Activated CD4-positive, alpha-beta memory T cell treated with anti-CD3 and anti-CD28 coated beads for 36 hours (primary cell): ENCODE measurements at regions of chr3 and their contacts with region 1.

Region 1: GRCh38 chr3:153043729-153044328 is 118.2 kb upstream of the RAP2B start:
- DNase-seq: no peak
- H3K4me3 Mint-ChIP-seq: no peak overlapping the region
- H3K27ac Mint-ChIP-seq: no peak overlapping the region
- H3K4me1 Mint-ChIP-seq: peaks cover 7% of the 10 kb centered on the region
- H3K27me3 Mint-ChIP-seq: no peaks in the 10 kb centered on the region

Region 2: DNA sequence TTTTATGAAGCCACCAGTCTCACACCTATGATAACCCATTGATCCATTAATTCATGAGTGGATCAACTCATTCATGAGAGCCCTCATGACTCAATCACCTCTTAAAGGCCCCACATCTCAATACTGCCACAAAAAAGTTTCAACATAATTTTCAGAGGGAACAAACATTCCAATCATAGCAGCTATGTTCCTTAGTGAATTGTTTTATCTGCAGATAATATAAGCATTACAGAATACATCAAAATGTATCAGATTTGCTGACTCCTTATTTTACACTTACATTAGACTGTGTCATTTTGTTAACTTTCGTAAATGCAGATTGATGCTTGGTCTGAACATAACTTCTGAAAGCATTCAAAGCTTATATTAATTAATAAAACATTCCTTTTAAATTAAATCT is 930.4 kb before region 1 on chr3:
- CTCF ChIA-PET with region 1: no interaction called
- POLR2A ChIA-PET with region 1: no interaction called
- intact Hi-C with region 1: no loop called
- DNase-seq: no peak
- H3K4me3 Mint-ChIP-seq: no peak overlapping the region
- H3K27ac Mint-ChIP-seq: no peak overlapping the region
- H3K4me1 Mint-ChIP-seq: no peaks in the 10 kb centered on the region
- H3K27me3 Mint-ChIP-seq: no peaks in the 10 kb centered on the region

Region 3: GRCh38 chr3:152909180-152909883 is 134.5 kb before region 1 on chr3:
- CTCF ChIA-PET with region 1: no interaction called
- POLR2A ChIA-PET with region 1: no interaction called
- intact Hi-C with region 1: no loop called
- DNase-seq: no peak
- H3K4me3 Mint-ChIP-seq: no peak overlapping the region
- H3K27ac Mint-ChIP-seq: no peak overlapping the region
- H3K4me1 Mint-ChIP-seq: no peaks in the 10 kb centered on the region
- H3K27me3 Mint-ChIP-seq: no peaks in the 10 kb centered on the region

Region 4: DNA sequence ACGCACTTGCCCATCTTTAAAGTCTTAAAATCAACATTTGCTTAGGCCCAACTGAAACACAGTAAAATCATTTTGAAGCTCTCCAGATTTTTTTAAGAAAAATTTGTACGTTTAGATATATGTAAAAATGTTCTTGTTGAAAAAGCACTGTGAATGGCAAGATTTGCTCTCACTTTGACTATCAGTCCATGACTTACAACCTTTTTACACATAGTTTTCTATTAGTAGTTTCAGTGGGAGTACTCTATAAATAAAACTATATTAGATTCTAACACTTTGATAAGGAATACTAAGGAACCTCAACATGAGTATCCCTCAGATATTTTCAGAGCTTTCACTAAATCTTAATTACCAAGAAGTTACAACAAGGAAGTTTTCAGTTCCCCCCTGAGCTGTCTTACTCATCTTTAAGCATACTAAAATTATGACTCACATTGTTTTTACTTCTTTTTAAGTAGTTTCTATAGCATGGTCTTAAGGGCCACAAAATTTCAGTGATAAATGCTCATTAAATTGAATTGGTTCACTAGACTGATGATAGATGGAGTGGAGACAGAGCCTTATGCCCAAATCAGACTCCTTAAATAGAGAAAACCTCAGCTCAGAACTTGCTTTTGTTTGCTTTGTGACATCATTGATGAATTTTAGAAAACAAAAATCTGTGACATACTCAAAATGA is 86.6 kb after region 1 on chr3:
- CTCF ChIA-PET with region 1: interaction called, 3 read pairs
- POLR2A ChIA-PET with region 1: no interaction called
- intact Hi-C with region 1: loop called (anchors 2 kb)
- DNase-seq: no peak
- H3K4me3 Mint-ChIP-seq: no peak overlapping the region
- H3K27ac Mint-ChIP-seq: no peak overlapping the region
- H3K4me1 Mint-ChIP-seq: peaks cover 6% of the 10 kb centered on the region
- H3K27me3 Mint-ChIP-seq: peaks cover 5% of the 10 kb centered on the region

Region 5: GRCh38 chr3:153221748-153222162 is 177.9 kb after region 1 on chr3:
- CTCF ChIA-PET with region 1: interaction called, 5 read pairs
- POLR2A ChIA-PET with region 1: interaction called, 3 read pairs
- intact Hi-C with region 1: loop called (anchors 5 kb)
- DNase-seq: peak; percentile 81
- H3K4me3 Mint-ChIP-seq: peak overlapping the region; percentile 72
- H3K27ac Mint-ChIP-seq: peak overlapping the region; percentile 90
- H3K4me1 Mint-ChIP-seq: peaks cover 54% of the 10 kb centered on the region
- H3K27me3 Mint-ChIP-seq: no peaks in the 10 kb centered on the region

Region 6: DNA sequence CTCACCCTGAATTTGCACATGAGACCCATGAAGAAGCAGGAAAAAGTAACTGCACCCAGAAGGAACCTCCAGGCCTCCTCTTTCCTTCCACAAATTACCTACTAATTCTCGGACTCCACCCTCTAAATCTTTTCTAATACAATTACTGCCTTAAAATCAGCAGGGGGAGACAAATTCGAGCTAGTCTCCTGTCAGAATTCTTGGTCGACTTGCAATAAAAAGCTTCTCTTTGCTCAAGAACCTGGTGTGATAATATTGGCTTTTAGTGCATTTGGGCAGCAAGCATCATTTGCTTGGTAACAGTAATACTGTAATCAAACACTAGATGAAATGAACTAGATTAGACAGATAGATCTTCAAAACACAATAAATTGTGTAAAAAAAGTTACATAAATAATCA is 400.1 kb after region 1 on chr3:
- CTCF ChIA-PET with region 1: interaction called, 3 read pairs
- POLR2A ChIA-PET with region 1: no interaction called
- intact Hi-C with region 1: loop called (anchors 2 kb)
- DNase-seq: no peak
- H3K4me3 Mint-ChIP-seq: no peak overlapping the region
- H3K27ac Mint-ChIP-seq: no peak overlapping the region
- H3K4me1 Mint-ChIP-seq: peaks cover 18% of the 10 kb centered on the region
- H3K27me3 Mint-ChIP-seq: peaks cover 1% of the 10 kb centered on the region

Region 7: GRCh38 chr3:153768561-153769469 is 725.0 kb after region 1 on chr3:
- CTCF ChIA-PET with region 1: interaction called, 8 read pairs
- POLR2A ChIA-PET with region 1: no interaction called
- intact Hi-C with region 1: loop called (anchors 1 kb)
- DNase-seq: peak; percentile 57
- H3K4me3 Mint-ChIP-seq: no peak overlapping the region
- H3K27ac Mint-ChIP-seq: no peak overlapping the region
- H3K4me1 Mint-ChIP-seq: peaks cover 2% of the 10 kb centered on the region
- H3K27me3 Mint-ChIP-seq: peaks cover 2% of the 10 kb centered on the region